CD8-positive, alpha-beta T cell (primary cell): ENCODE measurements at regions of chr3 and their contacts with region 1.

Region 1: DNA sequence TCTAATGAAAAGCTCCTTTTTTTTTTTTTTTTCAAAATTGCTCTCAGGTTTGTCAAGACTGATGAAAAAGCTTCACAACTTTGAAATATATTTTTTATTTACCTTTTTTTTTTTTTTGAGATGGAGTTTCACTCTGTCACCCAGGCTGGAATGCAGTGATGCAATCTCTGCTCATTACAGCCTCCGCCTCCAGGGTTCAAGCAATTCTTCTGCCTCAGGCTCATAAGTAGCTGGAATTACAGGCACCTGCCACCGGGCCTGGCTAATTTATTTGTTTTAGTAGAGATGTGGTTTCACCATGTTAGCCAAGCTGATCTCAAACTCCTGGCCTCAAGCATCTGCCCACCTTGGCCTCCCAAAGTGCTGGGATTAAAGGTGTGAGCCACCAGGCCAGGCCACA is 1515.0 kb downstream of the OTOL1 start:
- DNase-seq: no peak
- ATAC-seq: no peak
- H3K4me3 ChIP-seq: no peak overlapping the region
- H3K4me3 Mint-ChIP-seq: no peak overlapping the region
- H3K27ac ChIP-seq: no peak overlapping the region
- H3K27ac Mint-ChIP-seq: no peak overlapping the region
- H3K4me1 ChIP-seq: no peaks in the 10 kb centered on the region
- H3K4me1 Mint-ChIP-seq: no peaks in the 10 kb centered on the region
- H3K27me3 ChIP-seq: no peaks in the 10 kb centered on the region
- H3K27me3 Mint-ChIP-seq: no peaks in the 10 kb centered on the region
- CTCF ChIP-seq: no peak

Region 2: DNA sequence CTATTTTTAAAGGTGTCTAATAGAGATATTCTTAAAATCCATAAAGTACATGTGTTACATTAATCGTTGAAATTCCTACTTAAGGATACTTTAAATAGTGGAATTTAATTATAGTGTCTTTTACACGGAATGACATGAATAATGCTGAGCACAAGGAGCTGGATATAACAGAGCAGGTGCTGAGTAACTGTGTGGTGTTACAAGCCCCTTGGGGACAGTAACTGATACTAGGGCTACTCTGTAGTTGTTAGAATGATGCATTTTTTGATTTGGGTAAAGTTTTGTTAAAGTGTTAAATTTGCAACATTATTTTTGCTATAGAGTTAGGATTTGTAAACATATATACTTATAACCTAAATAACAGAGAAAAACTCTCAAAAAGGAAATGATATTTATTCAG is 18.8 kb before region 1 on chr3:
- CTCF ChIA-PET with region 1: no interaction called
- POLR2A ChIA-PET with region 1: no interaction called
- intact Hi-C with region 1: loop called in 1 of 2 experiments (anchors 2 kb)
- DNase-seq: no peak
- ATAC-seq: no peak
- H3K4me3 ChIP-seq: no peak overlapping the region
- H3K4me3 Mint-ChIP-seq: no peak overlapping the region
- H3K27ac ChIP-seq: no peak overlapping the region
- H3K27ac Mint-ChIP-seq: no peak overlapping the region
- H3K4me1 ChIP-seq: no peaks in the 10 kb centered on the region
- H3K4me1 Mint-ChIP-seq: no peaks in the 10 kb centered on the region
- H3K27me3 ChIP-seq: no peaks in the 10 kb centered on the region
- H3K27me3 Mint-ChIP-seq: no peaks in the 10 kb centered on the region
- CTCF ChIP-seq: no peak

Region 3: GRCh38 chr3:162998205-162998604 is 13.4 kb before region 1 on chr3:
- CTCF ChIA-PET with region 1: interaction called, 3 read pairs
- POLR2A ChIA-PET with region 1: no interaction called
- intact Hi-C with region 1: loop called (anchors 1 kb)
- DNase-seq: no peak
- ATAC-seq: no peak
- H3K4me3 ChIP-seq: no peak overlapping the region
- H3K4me3 Mint-ChIP-seq: no peak overlapping the region
- H3K27ac ChIP-seq: no peak overlapping the region
- H3K27ac Mint-ChIP-seq: no peak overlapping the region
- H3K4me1 ChIP-seq: no peaks in the 10 kb centered on the region
- H3K4me1 Mint-ChIP-seq: no peaks in the 10 kb centered on the region
- H3K27me3 ChIP-seq: no peaks in the 10 kb centered on the region
- H3K27me3 Mint-ChIP-seq: no peaks in the 10 kb centered on the region
- CTCF ChIP-seq: no peak